ENCODE measurements at regions of chr7 and their contacts with region 1.

Region 1: DNA sequence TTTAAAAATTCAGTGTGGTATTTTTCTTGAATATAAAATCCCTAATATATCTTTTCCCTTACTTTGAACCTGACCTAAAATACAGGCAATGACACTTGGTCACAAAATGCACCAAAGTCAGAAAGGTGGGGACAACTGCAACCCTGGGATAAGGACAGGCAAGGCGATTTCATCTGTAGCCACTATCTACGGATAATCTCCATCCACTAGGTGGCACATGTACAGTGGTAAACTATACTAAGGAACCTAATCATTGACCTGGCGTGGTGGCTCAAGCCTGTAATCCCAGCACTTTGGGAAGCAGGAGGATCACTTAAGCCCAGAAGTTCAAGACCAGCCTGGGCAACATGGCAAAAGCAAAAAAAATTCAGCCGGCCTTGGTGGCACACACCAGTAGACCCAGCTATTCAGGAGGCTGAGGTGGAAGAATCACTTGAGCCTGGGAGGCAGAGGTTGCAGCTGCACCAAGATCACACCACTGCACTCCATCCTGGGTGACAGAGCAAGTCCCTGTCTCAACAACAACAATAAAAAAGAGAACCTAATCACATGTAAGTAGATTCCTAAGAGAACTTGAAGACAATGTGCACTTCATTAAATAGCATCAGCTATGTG is 98.9 kb downstream of the KMT2C start:
- DNase-seq: no peak

Region 2: DNA sequence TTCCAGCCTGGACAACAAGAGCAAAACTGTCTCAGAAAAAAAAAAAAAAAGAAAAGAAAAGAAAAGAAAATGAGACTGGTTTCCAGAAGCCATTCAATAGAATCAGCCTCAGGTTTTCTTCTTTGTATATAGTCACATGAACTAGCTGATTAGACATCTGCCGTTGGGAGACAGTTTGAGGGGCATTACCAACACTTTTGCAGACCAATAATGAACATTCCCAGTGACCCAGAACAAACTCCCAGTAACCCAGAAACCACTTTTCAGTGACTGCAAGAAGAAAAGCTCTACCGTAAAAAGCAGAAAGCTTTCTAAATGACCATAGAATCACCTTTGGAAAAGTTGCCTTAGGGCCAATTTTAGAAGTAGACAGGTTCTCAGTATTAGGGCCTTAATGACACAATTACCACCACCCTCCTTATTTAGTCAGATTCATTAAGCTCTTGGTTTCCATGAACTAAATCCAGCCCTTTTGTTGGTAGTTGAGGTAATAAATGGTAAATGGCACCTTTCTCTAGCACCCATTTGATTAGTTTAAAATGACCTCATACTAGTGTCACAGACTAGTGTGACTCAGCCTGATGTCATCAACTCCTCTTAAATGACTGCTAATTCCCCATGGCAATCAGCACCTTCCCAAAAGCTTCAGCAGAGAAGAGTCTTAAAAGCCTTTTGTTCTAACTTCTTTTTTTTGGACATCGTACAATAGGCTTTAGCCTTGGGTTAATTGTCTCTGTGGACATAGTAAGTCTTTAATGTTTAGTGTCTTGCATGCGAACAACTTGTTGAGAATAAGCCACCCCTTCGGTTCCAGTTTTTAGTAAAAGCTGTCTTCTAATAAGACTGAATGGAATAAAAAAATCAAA is 372.7 kb after region 1 on chr7:
- intact Hi-C with region 1: loop called (anchors 5 kb)
- DNase-seq: no peak